Cardiac septum (tissue), 1 donor: ENCODE measurements at regions of chr7 and their contacts with region 1.

Region 1: GRCh38 chr7:139618482-139619366 is 95.2 kb downstream of the CLEC2L start:
- DNase-seq: no peak

Region 2: GRCh38 chr7:138768241-138768640 is 850.5 kb before region 1 on chr7:
- intact Hi-C with region 1: no loop called
- DNase-seq: no peak

Region 3: GRCh38 chr7:139515266-139515665 is 103.5 kb before region 1 on chr7:
- intact Hi-C with region 1: loop called (anchors 10 kb)
- DNase-seq: no peak

Region 4: GRCh38 chr7:139669106-139670061 is 50.7 kb after region 1 on chr7:
- intact Hi-C with region 1: loop called (anchors 2 kb)
- DNase-seq: no peak